ENCODE measurements at regions of chr9 and their contacts with region 1.

Region 1: GRCh38 chr9:100216178-100216787 is 117.2 kb downstream of the INVS start:
- DNase-seq: peak in 1 of 2 donors; percentile 63
- ATAC-seq: peak; percentile 72

Region 2: DNA sequence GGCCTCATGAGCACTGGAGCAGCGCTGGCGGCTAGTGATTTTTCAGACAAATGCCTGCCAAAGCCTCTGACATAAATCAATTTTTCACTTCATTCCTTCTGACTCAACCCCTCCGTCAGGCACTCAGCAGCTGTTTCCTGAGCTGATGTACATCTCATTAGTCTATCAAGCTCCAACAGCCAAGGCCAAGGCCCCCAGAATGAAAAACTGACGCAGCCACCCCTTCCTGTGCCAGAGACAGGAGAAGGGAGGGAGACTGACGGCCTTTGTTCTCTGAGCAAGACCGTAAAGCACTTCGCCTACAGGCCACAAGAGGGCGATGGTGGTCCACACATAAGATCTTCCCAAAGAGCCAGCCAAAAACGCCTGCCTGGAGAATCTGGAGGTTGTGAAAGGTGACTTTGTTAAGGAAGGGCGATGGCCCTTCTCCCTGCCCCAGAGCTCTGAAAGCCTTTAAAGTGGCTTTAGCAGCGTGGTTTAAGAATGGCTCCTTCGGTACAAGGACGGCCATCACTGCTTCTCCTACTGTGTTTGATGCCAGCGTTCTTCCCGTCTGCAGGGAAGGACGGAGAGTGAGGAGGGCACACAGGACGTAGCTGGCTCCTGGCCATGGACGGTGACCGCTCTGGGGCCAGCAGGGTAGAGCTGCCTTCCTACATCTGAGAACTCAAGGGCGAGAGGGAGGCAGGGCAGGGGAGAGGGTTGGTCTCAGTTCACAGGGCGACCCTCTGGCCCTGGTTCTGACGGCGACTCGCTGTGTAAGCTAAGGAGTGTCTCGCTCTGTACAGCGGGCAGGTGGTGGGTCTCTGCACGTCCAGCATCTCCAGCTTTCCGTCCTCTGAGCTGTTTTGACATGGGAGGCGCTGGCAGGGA is 1031.6 kb before region 1 on chr9:
- intact Hi-C with region 1: loop called in 1 of 2 experiments (anchors 10 kb)
- DNase-seq: peak; percentile 72 to 84
- ATAC-seq: peak; percentile 95

Measured in left colon (tissue), 2 donors.